ENCODE measurements at regions of chr14 and their contacts with region 1.

Region 1: DNA sequence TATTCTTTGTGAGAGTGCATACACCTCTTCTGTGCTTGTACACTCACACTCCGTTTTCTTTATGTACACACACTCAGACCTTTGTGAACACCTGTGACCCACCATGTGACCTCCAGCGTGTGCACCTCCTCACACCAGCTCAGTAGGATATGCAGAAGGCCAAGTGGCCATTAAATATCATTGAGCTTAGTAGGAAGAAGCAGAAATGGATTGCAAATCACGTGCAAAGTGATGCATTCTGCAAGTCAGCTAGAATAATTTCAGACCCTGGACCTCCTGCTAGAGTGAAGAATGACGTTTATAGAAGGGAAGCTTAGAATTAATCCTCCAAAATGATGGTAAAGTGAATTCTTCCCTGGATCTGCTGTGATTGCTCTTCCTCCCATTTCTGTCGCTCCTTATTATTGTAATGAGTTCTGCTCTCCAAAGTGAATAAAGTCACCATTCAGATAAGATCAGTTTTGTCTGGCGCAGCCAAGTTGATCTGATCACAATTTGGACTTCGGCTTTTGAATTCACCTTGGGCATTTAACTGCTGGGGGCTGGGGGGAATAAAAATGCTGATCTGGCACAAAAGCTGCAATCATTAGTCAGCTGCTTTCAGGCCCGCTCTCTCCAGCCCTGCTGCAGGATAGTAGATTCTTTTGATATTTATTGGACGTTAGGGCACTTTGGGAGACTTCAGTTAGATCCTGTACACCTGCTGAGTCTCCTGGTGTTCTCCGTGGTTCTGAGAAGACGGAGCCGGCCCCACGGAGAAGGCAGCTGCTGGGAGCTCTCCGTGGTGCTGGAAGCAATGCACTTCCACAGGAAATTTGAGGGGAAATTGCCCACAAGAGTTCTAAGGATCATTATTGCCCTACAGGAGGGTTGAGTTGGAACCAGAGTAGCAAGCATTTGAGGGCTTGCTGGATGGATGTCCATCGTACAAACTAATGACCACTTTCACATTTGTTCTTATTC is 12.4 kb upstream of the NRXN3 start:
- DNase-seq: peak in 1 of 2 experiments; percentile 58
- H3K4me3 ChIP-seq: no peak overlapping the region
- H3K27ac ChIP-seq: no peak overlapping the region
- H3K4me1 ChIP-seq: peaks cover 0 to under 1% (median 0%) of the 10 kb centered on the region in 4 experiments; a peak in 1 of 7 replicates
- H3K27me3 ChIP-seq: no peaks in the 10 kb centered on the region
- CTCF ChIP-seq: no peak
- EP300 ChIP-seq: no peak
- POLR2A ChIP-seq: no peak
- RAD21 ChIP-seq: peak in 1 of 2 experiments; percentile 1; a peak in 1 of 4 replicates

Region 2: DNA sequence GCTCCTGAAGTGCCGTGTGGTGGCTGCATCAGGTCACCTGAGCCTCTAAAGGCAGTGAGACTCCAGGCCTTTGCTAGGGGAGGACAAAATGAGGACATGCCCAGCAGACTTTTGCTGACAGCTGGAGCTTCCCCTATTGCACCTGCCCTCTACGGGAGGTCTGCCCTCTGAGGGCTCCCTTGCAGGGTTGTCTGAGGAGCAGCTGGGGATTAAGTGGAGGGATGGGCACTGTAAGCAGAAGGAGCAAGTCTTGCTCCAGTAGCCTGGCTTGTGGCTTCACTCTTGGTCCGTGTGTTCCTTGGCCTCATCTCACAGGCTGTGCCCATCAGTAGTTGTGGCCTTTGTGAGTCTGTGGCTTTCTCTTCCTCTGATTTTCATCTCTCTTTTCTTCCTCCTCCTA is 54.5 kb before region 1 on chr14:
- CTCF ChIA-PET with region 1: no interaction called
- POLR2A ChIA-PET with region 1: no interaction called
- DNase-seq: no peak
- H3K4me3 ChIP-seq: no peak overlapping the region
- H3K27ac ChIP-seq: no peak overlapping the region
- H3K4me1 ChIP-seq: peaks cover 0 to 2% (median 0%) of the 10 kb centered on the region in 4 experiments; a peak in 2 of 7 replicates
- H3K27me3 ChIP-seq: no peaks in the 10 kb centered on the region; a peak in 1 of 7 replicates
- CTCF ChIP-seq: no peak
- EP300 ChIP-seq: no peak
- POLR2A ChIP-seq: no peak
- RAD21 ChIP-seq: no peak

Region 3: DNA sequence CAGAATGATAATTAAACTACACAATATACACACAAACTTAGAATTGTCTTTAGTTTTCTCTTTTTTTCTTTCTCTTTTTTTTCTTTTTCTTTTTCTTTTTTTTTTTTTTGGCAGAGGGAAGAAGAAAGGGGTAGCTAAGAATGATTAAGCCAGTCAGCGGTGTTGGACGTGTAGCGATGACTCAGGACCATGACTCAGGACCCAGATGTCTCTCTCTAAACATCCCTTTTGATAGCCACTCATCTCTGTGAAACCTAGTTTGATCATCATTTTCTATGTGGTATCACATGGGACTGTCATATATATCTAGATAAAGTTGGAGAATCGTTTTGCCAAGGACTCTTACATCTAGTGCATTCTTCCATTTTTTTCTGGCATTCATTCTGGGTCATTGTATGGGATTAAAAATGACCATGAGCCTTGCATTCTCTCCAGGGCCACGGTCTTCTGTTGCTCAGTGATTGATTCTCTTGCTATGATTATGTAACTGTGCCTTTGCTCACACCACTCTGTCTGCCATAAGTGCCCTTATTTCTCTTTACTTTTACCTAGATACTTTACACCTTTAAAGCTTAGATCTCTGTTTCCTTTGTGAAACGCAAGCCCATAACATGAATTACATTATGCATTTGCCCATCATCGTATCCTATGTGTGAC is 14.2 kb before region 1 on chr14:
- CTCF ChIA-PET with region 1: interaction called, 11 read pairs
- POLR2A ChIA-PET with region 1: no interaction called
- DNase-seq: no peak
- H3K4me3 ChIP-seq: no peak overlapping the region
- H3K27ac ChIP-seq: no peak overlapping the region
- H3K4me1 ChIP-seq: no peaks in the 10 kb centered on the region
- H3K27me3 ChIP-seq: no peaks in the 10 kb centered on the region
- CTCF ChIP-seq: no peak
- EP300 ChIP-seq: no peak
- POLR2A ChIP-seq: no peak
- RAD21 ChIP-seq: no peak

Region 4: GRCh38 chr14:78175412-78175811 is 17.6 kb after region 1 on chr14:
- CTCF ChIA-PET with region 1: no interaction called
- POLR2A ChIA-PET with region 1: no interaction called
- DNase-seq: no peak
- H3K4me3 ChIP-seq: no peak overlapping the region
- H3K27ac ChIP-seq: no peak overlapping the region
- H3K4me1 ChIP-seq: peaks cover 0 to 7% (median 3%) of the 10 kb centered on the region in 4 experiments; a peak in 2 of 7 replicates
- H3K27me3 ChIP-seq: no peaks in the 10 kb centered on the region
- CTCF ChIP-seq: no peak
- EP300 ChIP-seq: no peak
- POLR2A ChIP-seq: no peak
- RAD21 ChIP-seq: no peak

Measured in H1 (cell line).